ENCODE measurements at regions of chr10 and their contacts with region 1.

Region 1: DNA sequence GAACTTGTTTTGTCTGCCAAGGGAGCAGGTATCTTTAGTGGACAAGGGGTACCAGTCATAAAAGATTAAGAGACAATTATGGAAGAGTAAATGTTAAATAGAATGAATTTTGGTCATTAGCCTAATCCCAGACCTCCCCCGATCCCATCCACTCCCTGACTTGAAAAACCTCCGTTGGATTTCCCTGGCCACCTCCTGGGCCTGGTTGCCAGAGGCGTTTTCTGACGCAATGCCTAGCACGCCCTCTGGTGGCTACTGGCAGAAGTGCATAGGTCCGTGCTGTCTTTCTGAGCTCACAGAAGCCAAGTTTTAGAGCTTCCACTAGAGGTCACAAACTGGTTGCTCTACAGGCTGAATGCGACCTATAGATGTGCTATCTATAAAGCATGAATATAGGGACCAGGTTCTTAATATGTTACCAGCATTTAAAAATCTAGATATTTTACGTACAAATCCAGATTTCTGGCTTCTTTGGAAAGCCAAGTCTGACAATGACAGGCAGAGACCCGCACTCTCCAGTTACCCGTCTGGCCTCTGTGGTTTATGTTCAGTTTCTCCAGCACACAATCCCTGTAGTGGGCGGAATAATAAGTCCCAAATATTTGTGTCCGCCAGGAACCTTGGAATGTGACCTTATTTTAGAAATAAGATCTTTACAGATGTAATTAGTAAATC is 39.8 kb downstream of the SPOCK2 start:
- DNase-seq: peak; percentile 92 to 97
- ATAC-seq: peak; percentile 95
- H3K4me3 ChIP-seq: no peak overlapping the region
- H3K27ac ChIP-seq: no peak overlapping the region
- H3K4me1 ChIP-seq: no peaks in the 10 kb centered on the region
- H3K27me3 ChIP-seq: no peaks in the 10 kb centered on the region

Region 2: DNA sequence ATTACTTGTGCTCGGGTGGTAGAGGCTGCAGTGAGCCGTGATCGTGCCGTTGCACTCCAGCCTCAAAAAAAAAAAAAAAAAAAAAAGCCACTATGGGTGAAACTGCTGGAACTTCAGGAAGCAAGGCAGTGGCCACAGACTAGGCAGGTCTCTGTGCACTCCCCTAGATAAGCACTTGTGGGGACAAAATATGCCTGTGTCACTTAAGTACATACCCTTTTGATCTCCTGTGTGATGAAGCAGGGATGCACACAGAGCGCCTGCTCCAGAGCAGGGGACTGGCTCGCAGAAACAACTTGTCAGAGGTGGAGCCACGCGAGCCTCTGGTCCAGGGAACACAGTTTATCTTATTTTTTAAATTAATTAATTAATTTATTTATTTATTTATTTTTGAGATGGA is 154.7 kb before region 1 on chr10:
- intact Hi-C with region 1: loop called (anchors 2 kb)
- DNase-seq: peak in 1 of 2 donors; percentile 34
- ATAC-seq: no peak
- H3K4me3 ChIP-seq: no peak overlapping the region
- H3K27ac ChIP-seq: no peak overlapping the region
- H3K4me1 ChIP-seq: no peaks in the 10 kb centered on the region
- H3K27me3 ChIP-seq: no peaks in the 10 kb centered on the region

Region 3: GRCh38 chr10:71957546-71958275 is 90.9 kb before region 1 on chr10:
- intact Hi-C with region 1: loop called (anchors 1 to 2 kb)
- DNase-seq: no peak
- ATAC-seq: no peak
- H3K4me3 ChIP-seq: no peak overlapping the region
- H3K27ac ChIP-seq: no peak overlapping the region
- H3K4me1 ChIP-seq: no peaks in the 10 kb centered on the region
- H3K27me3 ChIP-seq: no peaks in the 10 kb centered on the region

Region 4: DNA sequence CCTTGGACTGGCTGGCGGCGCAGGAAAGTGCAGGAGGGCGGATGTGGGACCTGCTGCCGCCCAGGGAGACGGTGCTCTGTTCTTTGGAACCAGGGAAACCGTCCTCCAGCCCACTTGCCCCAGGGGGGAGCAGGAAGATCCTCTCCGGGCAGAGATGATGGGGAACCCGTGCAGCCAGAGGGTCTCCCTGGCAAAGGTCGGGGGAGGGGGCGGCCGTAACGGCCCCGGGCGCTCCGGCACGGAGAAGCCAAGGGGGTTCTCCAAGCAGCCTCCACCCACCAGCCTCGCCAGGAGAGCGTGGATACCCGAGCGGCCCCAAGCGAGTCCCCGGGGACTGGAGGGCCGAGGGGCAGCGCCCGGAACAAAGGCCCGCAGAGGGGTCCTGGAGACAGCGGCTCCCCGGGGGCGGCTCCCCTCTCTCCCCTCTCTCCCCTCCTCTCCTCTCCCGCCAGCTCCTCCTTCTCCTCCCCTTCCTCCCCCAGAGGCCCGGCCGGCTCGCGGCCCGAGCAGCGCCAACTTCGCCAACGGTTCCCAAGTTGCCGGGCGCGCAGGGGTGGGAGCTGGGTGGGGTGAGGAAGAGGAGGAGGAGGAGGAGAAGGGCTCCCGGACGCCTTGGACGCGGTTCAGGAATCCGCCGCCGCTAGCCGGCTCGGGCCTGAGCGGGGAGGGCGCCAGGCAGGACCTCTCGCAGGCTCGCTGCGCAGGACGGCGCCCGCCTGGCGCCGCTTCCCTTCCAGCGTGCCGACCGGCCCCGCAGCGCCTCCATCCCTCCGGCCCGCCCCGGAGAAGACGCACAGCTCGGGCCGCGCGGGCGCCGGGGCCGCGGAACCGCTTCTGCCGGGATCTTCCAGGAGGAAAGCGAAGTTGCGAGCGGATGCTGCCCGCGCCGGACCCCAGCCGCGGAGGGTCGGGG is 84.6 kb before region 1 on chr10 and contains the start of gene CHST3:
- intact Hi-C with region 1: loop called in 1 of 2 experiments (anchors 2 kb)
- DNase-seq: peak; percentile 87 to 94
- ATAC-seq: peak; percentile 86
- H3K4me3 ChIP-seq: peak within 1 kb of the TSS; percentile 74 to 85
- H3K27ac ChIP-seq: peak within 1 kb of the TSS; percentile 94 to 98
- H3K4me1 ChIP-seq: no peaks in the 10 kb centered on the region
- H3K27me3 ChIP-seq: no peaks in the 10 kb centered on the region
- total RNA-seq, gene CHST3: 30.5 to 47.9 TPM

Region 5: DNA sequence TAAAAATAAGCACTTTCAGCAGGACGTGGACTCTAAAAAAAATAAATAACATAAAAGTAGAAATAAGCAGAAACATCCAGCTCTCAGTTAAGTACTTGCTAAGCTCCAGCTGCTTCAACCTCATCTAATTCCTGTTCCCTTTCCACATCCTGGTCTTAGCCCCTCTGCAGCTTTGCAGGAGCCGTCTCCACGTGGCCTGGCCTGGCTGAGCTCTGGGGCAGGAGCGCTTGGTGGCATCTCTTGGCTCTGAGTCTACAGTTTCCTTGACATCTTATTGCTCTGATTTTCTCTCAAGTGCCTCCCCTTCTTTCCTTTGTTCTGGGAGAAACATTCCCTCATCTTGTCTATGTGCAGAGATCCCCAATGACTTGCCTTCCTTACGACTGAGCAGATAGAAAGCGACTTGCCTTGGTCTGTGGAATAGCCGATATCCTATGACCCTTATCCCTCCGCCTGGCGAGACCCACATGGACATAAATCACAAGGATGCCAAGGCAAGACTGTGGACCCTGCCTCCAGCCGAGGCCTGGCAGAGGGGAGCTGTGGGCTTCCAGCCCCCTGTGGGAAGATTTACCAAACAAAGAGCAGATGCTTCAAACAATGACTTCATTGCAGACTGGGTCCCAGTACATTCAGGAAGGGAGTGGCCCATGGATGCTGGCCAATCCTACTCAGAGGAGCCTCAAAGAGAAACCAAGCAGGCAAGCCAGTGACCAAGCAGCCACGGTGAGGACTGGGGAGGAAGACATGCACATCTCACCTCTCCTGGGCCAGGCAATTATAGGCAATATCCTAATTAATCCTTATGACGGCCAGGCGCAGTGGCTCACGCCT is 22.1 kb before region 1 on chr10:
- intact Hi-C with region 1: no loop called
- DNase-seq: peak; percentile 73 to 80
- ATAC-seq: peak; percentile 34
- H3K4me3 ChIP-seq: no peak overlapping the region
- H3K27ac ChIP-seq: no peak overlapping the region
- H3K4me1 ChIP-seq: no peaks in the 10 kb centered on the region
- H3K27me3 ChIP-seq: no peaks in the 10 kb centered on the region

Region 6: DNA sequence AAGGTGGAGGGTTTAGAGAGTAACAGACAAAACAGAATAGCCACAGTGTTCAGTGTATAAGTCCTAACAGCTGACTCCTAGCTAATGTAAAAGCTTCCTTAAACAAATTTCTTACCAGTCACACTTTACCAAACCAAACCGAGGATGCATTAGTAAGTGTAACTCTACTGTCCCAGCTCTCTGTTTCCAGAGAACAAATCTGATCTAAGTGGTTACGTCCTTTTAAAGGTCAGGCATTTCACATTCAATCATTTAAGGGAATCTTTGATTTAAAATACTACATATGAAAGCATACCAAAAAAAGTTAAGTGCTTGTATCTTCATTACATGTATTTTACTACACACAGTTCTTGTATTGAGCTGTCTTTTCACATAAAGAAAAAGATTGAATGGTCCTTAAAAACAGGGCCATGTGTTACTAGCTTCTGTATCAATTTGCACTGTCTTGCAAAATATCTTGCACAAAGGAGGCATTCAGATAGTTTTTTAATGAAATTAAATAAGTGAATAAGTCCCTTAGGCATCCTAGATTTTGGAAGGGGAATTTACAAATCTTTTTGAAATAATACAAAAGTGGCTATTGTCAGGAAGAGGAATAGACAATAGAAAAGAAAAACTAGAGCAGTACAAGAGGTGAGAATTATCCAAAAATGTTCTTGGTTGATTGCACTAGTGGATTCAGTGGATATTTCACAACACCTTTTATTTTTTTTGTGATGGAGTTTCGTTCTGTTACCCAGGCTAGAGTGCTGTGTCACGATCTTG is 98.2 kb after region 1 on chr10:
- intact Hi-C with region 1: no loop called
- DNase-seq: no peak
- ATAC-seq: no peak
- H3K4me3 ChIP-seq: no peak overlapping the region
- H3K27ac ChIP-seq: no peak overlapping the region
- H3K4me1 ChIP-seq: no peaks in the 10 kb centered on the region
- H3K27me3 ChIP-seq: no peaks in the 10 kb centered on the region

Region 7: GRCh38 chr10:72337020-72337629 is 288.5 kb after region 1 on chr10:
- intact Hi-C with region 1: loop called (anchors 2 to 5 kb)
- DNase-seq: peak; percentile 88 to 94
- ATAC-seq: peak; percentile 66
- H3K4me3 ChIP-seq: no peak overlapping the region
- H3K27ac ChIP-seq: no peak overlapping the region
- H3K4me1 ChIP-seq: no peaks in the 10 kb centered on the region
- H3K27me3 ChIP-seq: no peaks in the 10 kb centered on the region

Measured in aorta (tissue), 5 donors.